Mammary epithelial cell (primary cell): ENCODE measurements at regions of chr2 and their contacts with region 1.

Region 1: GRCh38 chr2:27191053-27191829 is 20.6 kb upstream of the ATRAID start:
- DNase-seq: peak; percentile 38
- H3K4me3 ChIP-seq: no peak overlapping the region
- H3K27ac ChIP-seq: no peak overlapping the region
- H3K4me1 ChIP-seq: no peaks in the 10 kb centered on the region
- H3K27me3 ChIP-seq: no peaks in the 10 kb centered on the region
- CTCF ChIP-seq: peak; percentile 64 to 67

Region 2: GRCh38 chr2:27095745-27096651 is 95.2 kb before region 1 on chr2:
- CTCF ChIA-PET with region 1: interaction called, 3 read pairs
- dilution Hi-C with region 1: no loop called
- in situ Hi-C with region 1: loop called in 1 of 2 experiments (anchors 10 kb)
- intact Hi-C with region 1: loop called (anchors 1 kb)
- DNase-seq: peak; percentile 15
- H3K4me3 ChIP-seq: no peak overlapping the region
- H3K27ac ChIP-seq: no peak overlapping the region
- H3K4me1 ChIP-seq: no peaks in the 10 kb centered on the region
- H3K27me3 ChIP-seq: no peaks in the 10 kb centered on the region
- CTCF ChIP-seq: no peak

Region 3: DNA sequence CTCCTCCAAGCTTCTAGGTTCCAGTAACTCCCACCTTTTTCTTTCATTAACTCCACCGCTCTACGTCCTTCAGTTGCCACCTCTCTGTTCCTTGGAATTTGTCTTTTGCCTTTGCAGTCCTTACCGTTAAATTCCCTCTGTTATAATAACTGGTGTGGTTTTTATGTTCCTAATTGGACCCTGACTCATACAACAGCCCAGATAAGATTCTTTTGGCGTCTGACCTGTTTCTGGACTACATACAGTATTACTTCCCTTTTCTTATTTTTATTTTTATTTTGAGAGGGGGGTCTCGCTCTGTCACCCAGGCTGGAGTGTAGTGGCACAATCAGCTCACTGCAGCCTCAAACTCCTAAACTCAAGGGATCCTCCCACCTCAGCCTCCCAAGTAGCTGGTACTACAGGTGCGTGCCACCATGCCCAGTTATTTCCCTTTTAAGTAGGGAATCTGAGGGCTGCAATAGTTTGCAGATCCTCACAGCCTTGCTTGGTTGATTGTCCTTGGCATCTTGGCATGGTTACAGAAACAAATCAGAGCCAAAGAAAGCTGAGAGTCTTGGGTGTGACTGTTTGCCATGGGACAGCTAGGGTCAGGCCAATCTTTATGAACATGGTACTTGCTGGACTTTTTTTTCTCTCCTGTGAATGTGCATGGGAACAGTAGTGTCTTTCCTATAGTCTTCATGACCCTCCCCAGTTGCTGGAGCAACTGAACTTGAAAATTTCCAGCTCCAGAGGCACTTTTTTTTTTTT is 20.5 kb before region 1 on chr2:
- CTCF ChIA-PET with region 1: interaction called, 4 read pairs
- dilution Hi-C with region 1: no loop called
- in situ Hi-C with region 1: no loop called
- intact Hi-C with region 1: loop called (anchors 2 kb)
- DNase-seq: no peak
- H3K4me3 ChIP-seq: no peak overlapping the region
- H3K27ac ChIP-seq: no peak overlapping the region
- H3K4me1 ChIP-seq: no peaks in the 10 kb centered on the region
- H3K27me3 ChIP-seq: no peaks in the 10 kb centered on the region
- CTCF ChIP-seq: no peak